ENCODE measurements at regions of chr16 and their contacts with region 1.

Region 1: GRCh38 chr16:46801428-46802049 is 29.4 kb downstream of the C16orf87 start:
- DNase-seq: no peak
- ATAC-seq: peak; percentile 72

Region 2: DNA sequence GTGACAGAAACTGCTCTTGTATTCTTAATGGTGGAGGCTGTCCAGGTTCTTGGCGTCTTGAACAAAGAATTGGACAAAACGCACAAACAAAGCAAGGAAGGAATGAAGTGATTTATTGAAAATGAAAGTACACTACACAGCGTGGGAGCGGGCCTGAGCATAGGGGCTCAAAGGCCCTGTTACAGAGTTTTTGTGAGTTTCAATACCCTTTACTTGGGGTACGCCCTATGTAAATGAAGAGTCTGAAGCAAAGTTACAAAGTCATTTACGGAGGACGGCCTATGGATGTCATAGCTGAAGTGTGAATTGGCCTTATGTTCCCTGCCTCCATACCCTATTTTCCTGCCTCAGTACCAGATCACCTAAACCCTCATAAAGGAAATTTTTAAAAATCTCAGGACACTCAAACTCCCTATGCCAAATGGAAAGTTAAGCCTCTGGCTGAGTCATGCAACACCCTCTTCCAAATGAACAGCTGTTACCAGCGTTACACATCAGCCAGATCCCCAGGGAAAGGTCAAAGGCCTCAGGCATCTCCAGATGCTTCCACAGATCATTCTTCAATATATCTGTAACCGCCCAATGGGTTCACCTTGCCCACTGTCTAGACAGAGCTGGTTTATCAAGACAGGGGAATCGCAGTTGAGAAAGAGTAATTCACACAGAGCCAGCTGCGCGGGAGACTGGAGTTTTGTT is 151.5 kb before region 1 on chr16:
- intact Hi-C with region 1: no loop called
- DNase-seq: no peak
- ATAC-seq: peak; percentile 80

Region 3: GRCh38 chr16:46731691-46732555 is 69.6 kb before region 1 on chr16:
- intact Hi-C with region 1: loop called (anchors 5 kb)
- DNase-seq: no peak
- ATAC-seq: peak; percentile 38

Region 4: DNA sequence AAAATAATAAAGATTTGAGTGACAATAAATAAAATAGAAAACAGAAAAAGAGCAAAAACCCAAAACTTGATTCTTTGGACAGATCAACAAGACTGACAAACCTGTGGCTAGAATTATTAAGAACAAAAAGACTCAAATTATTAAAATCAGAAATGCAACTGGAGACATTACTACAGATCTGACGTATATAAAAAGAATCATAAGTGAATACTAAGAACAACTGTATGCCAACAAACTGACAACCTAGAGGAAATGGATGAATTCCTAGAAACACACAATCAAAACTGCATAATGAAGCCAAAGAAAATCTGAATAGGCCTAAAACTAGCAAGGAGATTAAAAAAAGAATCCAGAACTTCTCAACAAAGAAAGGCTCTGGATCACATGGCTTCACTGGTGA is 294.8 kb after region 1 on chr16:
- intact Hi-C with region 1: no loop called
- DNase-seq: no peak
- ATAC-seq: no peak

Measured in Right ventricle myocardium superior (tissue), 1 donor.